ENCODE measurements at regions of chr14 and their contacts with region 1.

Region 1: GRCh38 chr14:100285021-100285912 is 21.0 kb downstream of the SLC25A29 start:
- DNase-seq: peak; percentile 77
- ATAC-seq: peak; percentile 95
- H3K4me3 Mint-ChIP-seq: peak overlapping the region; percentile 58
- H3K27ac Mint-ChIP-seq: peak overlapping the region; percentile 63
- H3K4me1 Mint-ChIP-seq: peaks cover 12% of the 10 kb centered on the region
- H3K27me3 Mint-ChIP-seq: no peaks in the 10 kb centered on the region
- CTCF ChIP-seq: peak; percentile 100

Region 2: DNA sequence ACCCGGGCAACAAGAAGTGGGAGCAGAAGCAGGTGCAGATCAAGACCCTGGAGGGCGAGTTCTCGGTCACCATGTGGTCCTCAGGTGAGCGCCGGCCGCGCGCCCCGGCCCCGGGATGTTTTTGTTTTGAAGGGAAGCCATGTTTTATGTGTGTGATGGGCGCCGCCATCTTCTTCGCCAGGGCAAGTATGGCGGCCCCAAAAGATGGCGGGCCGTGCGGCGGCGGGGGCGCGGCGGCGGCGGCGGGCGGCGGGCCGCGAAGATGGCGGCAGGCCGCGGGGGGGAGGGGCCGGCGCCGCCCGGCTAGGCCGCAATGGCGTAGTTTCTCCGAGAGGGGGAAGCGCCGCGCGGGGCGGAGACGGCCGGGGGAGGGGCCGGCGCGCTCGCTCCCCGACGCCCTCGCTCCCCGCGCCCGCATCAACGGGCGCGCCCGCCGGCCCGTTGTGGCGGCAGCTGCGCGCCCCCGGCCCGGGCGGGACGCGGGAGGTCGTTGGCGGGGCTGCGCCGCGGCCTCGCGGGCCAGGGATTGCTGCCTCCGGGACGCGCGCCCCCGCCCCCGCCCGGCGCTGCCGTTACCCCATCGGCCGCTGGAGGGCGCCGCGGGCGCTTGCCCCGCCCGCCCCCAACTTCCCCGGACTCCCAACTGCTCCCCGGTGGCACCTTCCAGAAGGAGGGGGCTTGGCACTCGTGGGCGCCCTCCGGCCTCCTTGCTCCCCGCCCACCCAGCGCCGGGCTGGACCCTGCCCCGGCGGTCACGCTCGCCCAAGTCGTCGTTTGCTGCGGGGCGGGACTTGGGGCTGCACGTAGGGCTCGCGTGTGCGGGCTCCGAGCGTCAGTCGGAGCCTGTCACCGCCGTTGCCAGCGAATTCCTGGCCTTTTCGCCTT is 45.2 kb before region 1 on chr14:
- CTCF ChIA-PET with region 1: interaction called, 16 read pairs
- POLR2A ChIA-PET with region 1: interaction called, 3 read pairs
- intact Hi-C with region 1: no loop called
- DNase-seq: peak; percentile 88
- ATAC-seq: peak; percentile 52
- H3K4me3 Mint-ChIP-seq: peak overlapping the region; percentile 97
- H3K27ac Mint-ChIP-seq: peak overlapping the region; percentile 93
- H3K4me1 Mint-ChIP-seq: peaks cover 45% of the 10 kb centered on the region
- H3K27me3 Mint-ChIP-seq: no peaks in the 10 kb centered on the region
- CTCF ChIP-seq: peak; percentile 77

Region 3: GRCh38 chr14:100246826-100247428 is 38.3 kb before region 1 on chr14:
- CTCF ChIA-PET with region 1: interaction called, 16 read pairs
- POLR2A ChIA-PET with region 1: interaction called, 3 read pairs
- intact Hi-C with region 1: no loop called
- DNase-seq: no peak
- ATAC-seq: peak; percentile 32
- H3K4me3 Mint-ChIP-seq: no peak overlapping the region
- H3K27ac Mint-ChIP-seq: peak overlapping the region; percentile 78
- H3K4me1 Mint-ChIP-seq: peaks cover 71% of the 10 kb centered on the region
- H3K27me3 Mint-ChIP-seq: no peaks in the 10 kb centered on the region
- CTCF ChIP-seq: no peak

Region 4: DNA sequence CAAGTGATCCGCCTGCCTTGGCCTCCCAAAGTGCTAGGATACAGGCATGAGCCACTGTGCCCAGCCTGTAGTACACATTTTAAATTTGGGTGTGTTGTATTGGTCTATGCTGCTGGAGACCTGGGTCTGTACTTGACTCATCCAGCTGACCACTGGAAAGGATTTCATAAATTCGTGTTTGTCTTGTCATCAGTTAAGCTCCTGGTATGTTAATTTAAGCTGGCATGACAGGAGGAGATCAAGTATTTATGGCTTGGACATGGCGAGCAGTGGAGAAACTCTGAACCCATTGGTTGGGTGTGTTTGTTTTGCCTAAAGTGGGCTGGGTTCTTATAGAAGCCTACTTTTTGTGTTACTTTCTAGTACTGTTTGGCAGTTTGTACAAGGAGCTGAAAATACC is 22.1 kb before region 1 on chr14:
- CTCF ChIA-PET with region 1: interaction called, 17 read pairs
- POLR2A ChIA-PET with region 1: interaction called, 3 read pairs
- intact Hi-C with region 1: no loop called
- DNase-seq: no peak
- ATAC-seq: no peak
- H3K4me3 Mint-ChIP-seq: no peak overlapping the region
- H3K27ac Mint-ChIP-seq: peak overlapping the region; percentile 57
- H3K4me1 Mint-ChIP-seq: peaks cover 81% of the 10 kb centered on the region
- H3K27me3 Mint-ChIP-seq: no peaks in the 10 kb centered on the region
- CTCF ChIP-seq: no peak

Region 5: DNA sequence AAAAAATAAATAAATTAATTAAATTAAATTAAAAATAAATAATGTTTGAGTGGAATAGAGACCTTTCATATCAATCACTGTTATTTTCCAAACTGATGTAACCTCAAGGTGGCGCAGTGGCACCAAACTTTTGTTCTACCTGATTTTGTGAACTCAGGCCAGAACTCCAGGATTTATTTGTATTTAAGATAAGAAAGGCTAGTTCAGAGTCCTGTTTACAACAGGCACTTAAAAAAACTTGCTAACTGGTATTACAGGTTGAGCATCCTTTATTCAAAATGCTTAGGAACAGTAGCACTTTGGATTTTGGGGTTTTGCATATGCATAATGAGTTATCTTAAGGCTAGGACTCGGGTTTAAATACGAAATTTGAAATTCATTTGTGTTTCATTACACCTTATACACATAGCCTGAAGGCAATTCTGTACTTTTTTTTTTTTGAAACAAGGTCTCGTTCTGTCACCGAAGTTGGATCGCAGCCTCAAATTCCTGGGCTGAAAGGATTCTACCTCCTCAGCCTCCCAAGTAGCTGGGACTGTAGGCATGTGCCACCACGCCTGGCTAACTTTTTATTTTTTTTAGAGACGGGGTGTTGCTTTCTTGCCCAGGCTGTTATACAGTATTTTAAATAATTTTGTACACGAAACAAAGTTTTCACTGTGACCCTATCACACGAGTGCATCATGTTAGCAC is 13.9 kb before region 1 on chr14:
- CTCF ChIA-PET with region 1: interaction called, 39 read pairs
- POLR2A ChIA-PET with region 1: no interaction called
- intact Hi-C with region 1: no loop called
- DNase-seq: peak; percentile 42
- ATAC-seq: no peak
- H3K4me3 Mint-ChIP-seq: no peak overlapping the region
- H3K27ac Mint-ChIP-seq: no peak overlapping the region
- H3K4me1 Mint-ChIP-seq: peaks cover 66% of the 10 kb centered on the region
- H3K27me3 Mint-ChIP-seq: no peaks in the 10 kb centered on the region
- CTCF ChIP-seq: peak; percentile 61

Measured in activated CD8-positive, alpha-beta T cell treated with anti-CD3 and anti-CD28 coated beads for 36 hours (primary cell).